Posterior cingulate gyrus (tissue), 11 donors: ENCODE measurements at regions of chr9 and their contacts with region 1.

Region 1: GRCh38 chr9:114291064-114291474 is 31.8 kb upstream of the ORM1 start:
- DNase-seq: peak; percentile 44 to 96 (median 78)

Region 2: GRCh38 chr9:113221003-113221799 is 1069.9 kb before region 1 on chr9 and contains the starts of genes FKBP15 and SLC31A1:
- intact Hi-C with region 1: no loop called
- DNase-seq: peak; percentile 98 to 100 (median 99)

Region 3: GRCh38 chr9:114082017-114082762 is 208.9 kb before region 1 on chr9:
- intact Hi-C with region 1: loop called (anchors 1 kb)
- DNase-seq: peak; percentile 69 to 97 (median 93)

Region 4: DNA sequence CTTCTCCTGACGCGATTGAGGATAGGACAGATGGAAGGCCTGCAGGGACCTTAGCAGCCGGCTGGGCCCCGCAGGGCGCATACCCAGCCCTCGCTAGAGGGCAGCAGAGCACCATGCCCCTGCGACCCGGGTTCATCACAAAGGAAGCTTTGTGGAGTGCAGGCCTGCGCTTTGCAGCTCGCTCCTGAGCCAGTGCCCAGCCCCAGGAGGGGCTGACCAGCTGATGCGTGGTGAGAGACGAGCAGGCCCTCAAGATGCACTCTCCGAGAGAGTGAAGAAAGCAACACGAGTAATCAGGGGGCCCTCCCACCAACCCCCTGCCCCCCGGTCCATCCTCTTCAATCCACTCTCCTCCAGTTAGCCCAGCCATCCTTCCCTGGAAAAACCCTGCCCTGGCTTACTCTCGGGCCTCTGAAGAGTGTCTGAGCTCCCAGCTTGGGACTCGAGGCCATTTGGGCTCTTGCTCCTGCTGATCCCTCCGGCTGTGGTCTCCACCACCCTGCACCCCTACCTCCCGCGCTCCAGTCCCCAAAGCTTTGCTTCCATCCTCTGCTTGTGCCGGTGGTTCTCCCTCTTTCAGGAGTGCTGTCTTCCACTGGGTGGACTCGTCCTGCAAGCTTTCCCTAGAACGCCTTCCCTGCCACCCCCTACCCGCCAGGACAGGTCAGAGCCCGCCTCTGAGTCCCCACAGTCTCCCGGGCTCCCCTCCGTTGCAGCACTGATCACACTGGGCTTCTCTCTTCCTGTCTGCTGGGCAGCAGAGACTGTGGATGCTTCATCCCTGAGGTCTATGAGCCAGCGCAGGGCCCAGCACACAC is 182.8 kb before region 1 on chr9:
- intact Hi-C with region 1: loop called (anchors 2 kb)
- DNase-seq: peak; percentile 51 to 97 (median 78)

Region 5: GRCh38 chr9:114155263-114155972 is 135.7 kb before region 1 on chr9 and contains the start of gene COL27A1:
- intact Hi-C with region 1: loop called (anchors 1 kb)
- DNase-seq: peak; percentile 53 to 96 (median 80)